Endothelial cell of umbilical vein (primary cell): ENCODE measurements at regions of chr22 and their contacts with region 1.

Region 1: DNA sequence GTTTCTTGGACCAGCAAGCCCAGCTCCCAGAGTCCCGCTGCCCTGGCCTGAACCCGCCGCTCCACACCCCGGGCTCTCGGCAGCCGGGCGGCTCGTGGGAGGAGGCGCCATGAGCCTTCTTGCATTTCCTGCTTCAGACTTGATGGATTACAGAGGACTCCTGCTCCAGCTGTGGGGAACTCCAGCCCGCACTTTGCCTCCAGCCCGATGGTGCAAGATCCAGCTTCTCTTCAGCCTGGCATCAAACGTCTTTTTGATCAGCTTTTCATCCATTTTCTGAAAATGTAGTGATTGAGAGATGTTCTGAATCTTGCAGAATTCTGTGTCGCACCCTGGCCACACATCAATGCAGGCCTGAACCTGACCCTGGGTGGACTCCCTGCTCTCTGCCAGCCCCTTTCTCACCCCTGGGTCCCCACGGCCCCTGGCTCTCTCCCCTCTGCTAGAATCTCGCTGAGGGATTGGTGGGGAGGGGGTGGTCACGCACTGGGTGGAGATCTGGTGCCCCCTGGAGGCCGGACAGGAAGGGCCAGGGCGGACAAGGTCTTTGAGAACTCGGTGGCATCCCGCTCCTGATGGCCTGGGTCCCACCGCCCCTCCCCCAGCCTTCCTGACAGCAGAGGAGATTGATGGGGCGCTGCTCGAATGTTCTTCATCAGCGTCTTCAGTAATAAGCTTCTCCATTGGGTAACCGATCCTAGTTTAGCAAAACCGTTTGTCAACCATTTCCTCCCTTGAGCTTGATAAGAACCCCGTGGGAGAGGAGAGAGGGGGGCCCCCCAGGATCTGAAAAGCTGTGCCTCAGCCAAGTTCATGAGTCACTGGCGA is 12.1 kb upstream of the NFAM1 start:
- DNase-seq: peak; percentile 90
- H3K4me3 ChIP-seq: peak overlapping the region in 2 of 3 experiments; percentile 1 to 46
- H3K27ac ChIP-seq: no peak overlapping the region
- H3K4me1 ChIP-seq: peaks cover 10% of the 10 kb centered on the region
- H3K27me3 ChIP-seq: no peaks in the 10 kb centered on the region
- CTCF ChIP-seq: peak; percentile 70 to 83
- POLR2A ChIP-seq: no peak

Region 2: GRCh38 chr22:42090596-42091454 is 353.5 kb before region 1 on chr22 and contains the start of gene NDUFA6:
- CTCF ChIA-PET with region 1: interaction called, 47 read pairs
- POLR2A ChIA-PET with region 1: no interaction called
- dilution Hi-C with region 1: no loop called
- intact Hi-C with region 1: loop called (anchors 1 kb)
- DNase-seq: peak; percentile 100
- H3K4me3 ChIP-seq: peak within 1 kb of the TSS; percentile 51 to 77 (median 72)
- H3K27ac ChIP-seq: peak within 1 kb of the TSS; percentile 69
- H3K4me1 ChIP-seq: peaks cover 8% of the 10 kb centered on the region
- H3K27me3 ChIP-seq: no peaks in the 10 kb centered on the region
- CTCF ChIP-seq: peak; percentile 91 to 97
- POLR2A ChIP-seq: peak; percentile 88
- total RNA-seq, gene NDUFA6: 84.9 and 95.7 TPM in 2 replicates

Region 3: GRCh38 chr22:42151924-42152635 is 292.2 kb before region 1 on chr22:
- CTCF ChIA-PET with region 1: interaction called, 15 read pairs
- POLR2A ChIA-PET with region 1: no interaction called
- dilution Hi-C with region 1: no loop called
- intact Hi-C with region 1: no loop called
- DNase-seq: no peak
- H3K4me3 ChIP-seq: peak overlapping the region in 1 of 3 experiments; percentile 5
- H3K27ac ChIP-seq: no peak overlapping the region
- H3K4me1 ChIP-seq: no peaks in the 10 kb centered on the region
- H3K27me3 ChIP-seq: no peaks in the 10 kb centered on the region
- CTCF ChIP-seq: no peak
- POLR2A ChIP-seq: no peak

Region 4: DNA sequence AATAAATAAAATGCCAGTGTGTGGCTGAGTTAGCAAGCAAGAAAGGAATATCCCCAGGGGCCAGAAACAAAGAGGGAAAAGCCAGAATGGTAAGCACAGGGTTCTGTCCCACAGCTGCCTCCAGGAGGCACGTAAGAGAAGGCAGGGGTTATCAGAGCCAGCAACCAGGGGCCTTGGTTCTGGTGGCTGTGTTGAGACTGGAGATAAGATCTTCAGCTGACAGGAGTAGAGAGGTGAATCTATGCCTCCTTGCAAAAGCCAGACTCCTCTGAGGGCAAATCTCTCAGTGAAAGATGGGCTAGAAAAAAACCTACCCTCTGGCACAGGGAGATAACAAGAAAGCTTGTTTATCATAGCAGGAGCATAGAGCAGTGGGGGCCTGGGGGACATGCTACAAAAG is 17.7 kb after region 1 on chr22:
- CTCF ChIA-PET with region 1: interaction called, 13 read pairs
- POLR2A ChIA-PET with region 1: no interaction called
- dilution Hi-C with region 1: no loop called
- intact Hi-C with region 1: no loop called
- DNase-seq: no peak
- H3K4me3 ChIP-seq: no peak overlapping the region
- H3K27ac ChIP-seq: no peak overlapping the region
- H3K4me1 ChIP-seq: no peaks in the 10 kb centered on the region
- H3K27me3 ChIP-seq: peaks cover 15 to 16% of the 10 kb centered on the region in 2 experiments
- CTCF ChIP-seq: no peak
- POLR2A ChIP-seq: no peak